ENCODE measurements at regions of chrX and their contacts with region 1.

Region 1: GRCh38 chrX:110146521-110146920 is 143.6 kb downstream of the TMEM164 start:
- DNase-seq: no peak
- ATAC-seq: peak; percentile 47
- H3K4me3 Mint-ChIP-seq: no peak overlapping the region
- H3K27ac Mint-ChIP-seq: no peak overlapping the region
- H3K4me1 Mint-ChIP-seq: peaks cover 7% of the 10 kb centered on the region
- H3K27me3 Mint-ChIP-seq: no peaks in the 10 kb centered on the region
- CTCF ChIP-seq: no peak

Region 2: DNA sequence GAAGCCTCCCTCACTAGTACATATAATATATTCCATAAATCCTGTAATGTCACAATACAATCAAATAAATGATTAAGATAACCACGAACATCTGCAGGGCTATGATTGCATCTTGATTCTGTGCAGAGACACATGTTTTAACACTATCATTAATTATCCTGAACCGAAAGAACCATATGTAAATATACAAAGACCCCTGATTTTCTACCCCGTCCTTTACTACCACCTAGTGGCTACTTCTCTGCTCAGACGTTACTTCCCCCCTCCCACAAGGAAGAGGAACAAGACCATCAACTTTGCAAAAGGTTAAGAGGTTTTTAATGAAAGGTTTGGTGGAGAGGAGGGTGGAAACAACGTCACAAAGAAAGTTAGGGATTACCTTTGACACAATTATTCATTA is 1842.3 kb before region 1 on chrX:
- CTCF ChIA-PET with region 1: no interaction called
- POLR2A ChIA-PET with region 1: no interaction called
- intact Hi-C with region 1: no loop called
- DNase-seq: no peak
- ATAC-seq: no peak
- H3K4me3 Mint-ChIP-seq: no peak overlapping the region
- H3K27ac Mint-ChIP-seq: no peak overlapping the region
- H3K4me1 Mint-ChIP-seq: no peaks in the 10 kb centered on the region
- H3K27me3 Mint-ChIP-seq: no peaks in the 10 kb centered on the region
- CTCF ChIP-seq: no peak

Region 3: GRCh38 chrX:109714340-109714958 is 432.1 kb before region 1 on chrX:
- CTCF ChIA-PET with region 1: interaction called, 18 read pairs
- POLR2A ChIA-PET with region 1: no interaction called
- intact Hi-C with region 1: loop called (anchors 1 kb)
- DNase-seq: no peak
- ATAC-seq: no peak
- H3K4me3 Mint-ChIP-seq: no peak overlapping the region
- H3K27ac Mint-ChIP-seq: no peak overlapping the region
- H3K4me1 Mint-ChIP-seq: peaks cover 30% of the 10 kb centered on the region
- H3K27me3 Mint-ChIP-seq: no peaks in the 10 kb centered on the region
- CTCF ChIP-seq: no peak

Region 4: GRCh38 chrX:110412971-110413721 is 266.6 kb after region 1 on chrX:
- CTCF ChIA-PET with region 1: interaction called, 63 read pairs
- POLR2A ChIA-PET with region 1: interaction called, 3 read pairs
- intact Hi-C with region 1: loop called (anchors 1 kb)
- DNase-seq: peak; percentile 37
- ATAC-seq: peak; percentile 86
- H3K4me3 Mint-ChIP-seq: no peak overlapping the region
- H3K27ac Mint-ChIP-seq: no peak overlapping the region
- H3K4me1 Mint-ChIP-seq: peaks cover 5% of the 10 kb centered on the region
- H3K27me3 Mint-ChIP-seq: no peaks in the 10 kb centered on the region
- CTCF ChIP-seq: peak; percentile 60

Region 5: GRCh38 chrX:110806145-110806544 is 659.6 kb after region 1 on chrX:
- CTCF ChIA-PET with region 1: no interaction called
- POLR2A ChIA-PET with region 1: no interaction called
- intact Hi-C with region 1: no loop called
- DNase-seq: no peak
- ATAC-seq: no peak
- H3K4me3 Mint-ChIP-seq: no peak overlapping the region
- H3K27ac Mint-ChIP-seq: no peak overlapping the region
- H3K4me1 Mint-ChIP-seq: no peaks in the 10 kb centered on the region
- H3K27me3 Mint-ChIP-seq: no peaks in the 10 kb centered on the region
- CTCF ChIP-seq: no peak

Region 6: DNA sequence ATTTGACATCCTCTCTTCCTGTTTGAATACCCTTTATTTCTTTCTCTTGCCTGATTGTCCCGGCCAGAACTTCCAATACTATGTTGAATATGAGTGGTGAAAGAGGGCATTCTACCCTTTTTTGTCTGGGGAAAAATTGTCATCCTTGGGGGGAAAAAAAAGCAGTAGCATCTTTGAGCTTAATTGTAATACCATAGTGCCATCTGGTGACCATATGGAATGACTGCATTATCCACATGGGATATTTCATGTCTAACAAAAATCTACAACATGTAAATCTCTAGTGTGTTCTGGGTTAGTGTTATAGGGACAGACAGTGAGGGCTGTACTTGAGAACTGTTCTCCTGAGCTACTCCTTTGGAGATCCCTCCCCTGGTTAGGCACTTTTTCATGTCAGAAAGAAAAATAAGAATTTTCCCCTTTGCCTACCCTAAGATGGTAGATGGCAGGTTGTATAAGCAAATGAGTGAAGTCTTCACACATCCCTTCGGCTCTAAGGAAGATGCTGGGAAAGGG is 1097.8 kb after region 1 on chrX:
- CTCF ChIA-PET with region 1: no interaction called
- POLR2A ChIA-PET with region 1: no interaction called
- intact Hi-C with region 1: loop called (anchors 10 kb)
- DNase-seq: no peak
- ATAC-seq: no peak
- H3K4me3 Mint-ChIP-seq: no peak overlapping the region
- H3K27ac Mint-ChIP-seq: no peak overlapping the region
- H3K4me1 Mint-ChIP-seq: no peaks in the 10 kb centered on the region
- H3K27me3 Mint-ChIP-seq: peaks cover 1% of the 10 kb centered on the region
- CTCF ChIP-seq: no peak